ENCODE measurements at regions of chrX and their contacts with region 1.

Region 1: DNA sequence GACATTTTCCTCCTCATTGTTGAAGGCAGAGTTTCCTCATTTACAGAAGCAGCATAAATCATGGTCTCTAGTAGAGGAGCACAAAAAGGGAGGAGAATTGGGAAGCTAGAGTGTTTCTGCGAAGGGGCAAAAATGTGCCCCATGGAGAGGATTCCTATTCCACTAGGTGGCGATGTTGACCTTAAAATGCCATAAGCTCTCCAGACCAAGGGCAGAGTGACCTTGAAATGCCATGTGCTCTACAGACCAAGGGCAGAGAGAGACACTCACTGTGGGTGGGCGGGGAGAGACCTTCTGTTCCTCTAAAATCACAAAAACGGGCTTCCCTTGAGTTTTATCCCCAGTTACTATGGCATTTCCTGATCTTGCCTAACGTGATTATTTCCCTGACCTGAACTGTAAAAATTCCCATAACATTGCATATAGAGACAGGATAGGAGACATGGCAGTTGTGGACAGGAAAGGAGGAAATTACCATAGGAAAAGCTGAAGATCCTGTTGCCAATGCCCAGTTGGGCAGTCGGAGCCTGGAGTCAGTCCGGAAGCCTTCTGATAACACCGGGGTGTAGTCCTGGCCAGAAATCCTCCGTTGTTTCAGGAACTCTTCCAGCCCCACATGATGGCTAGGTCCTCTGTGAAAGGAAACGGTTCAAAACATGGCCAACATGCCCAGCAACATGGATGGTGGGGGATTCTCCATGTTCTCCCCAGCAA is 567.7 kb downstream of the MAGEB5 start:
- DNase-seq: peak; percentile 87
- H3K4me3 ChIP-seq: no peak overlapping the region
- H3K27ac ChIP-seq: peak overlapping the region; percentile 87
- H3K4me1 ChIP-seq: peaks cover 19% of the 10 kb centered on the region
- H3K27me3 ChIP-seq: no peaks in the 10 kb centered on the region
- CTCF ChIP-seq: peak; percentile 33 to 50
- POLR2A ChIP-seq: no peak

Region 2: GRCh38 chrX:25858273-25858880 is 925.3 kb before region 1 on chrX:
- CTCF ChIA-PET with region 1: no interaction called
- POLR2A ChIA-PET with region 1: no interaction called
- dilution Hi-C with region 1: no loop called
- intact Hi-C with region 1: loop called (anchors 10 kb)
- DNase-seq: peak; percentile 73
- H3K4me3 ChIP-seq: no peak overlapping the region
- H3K27ac ChIP-seq: peak overlapping the region; percentile 45
- H3K4me1 ChIP-seq: peaks cover 5% of the 10 kb centered on the region
- H3K27me3 ChIP-seq: no peaks in the 10 kb centered on the region
- CTCF ChIP-seq: peak; percentile 13 to 16
- POLR2A ChIP-seq: no peak

Region 3: DNA sequence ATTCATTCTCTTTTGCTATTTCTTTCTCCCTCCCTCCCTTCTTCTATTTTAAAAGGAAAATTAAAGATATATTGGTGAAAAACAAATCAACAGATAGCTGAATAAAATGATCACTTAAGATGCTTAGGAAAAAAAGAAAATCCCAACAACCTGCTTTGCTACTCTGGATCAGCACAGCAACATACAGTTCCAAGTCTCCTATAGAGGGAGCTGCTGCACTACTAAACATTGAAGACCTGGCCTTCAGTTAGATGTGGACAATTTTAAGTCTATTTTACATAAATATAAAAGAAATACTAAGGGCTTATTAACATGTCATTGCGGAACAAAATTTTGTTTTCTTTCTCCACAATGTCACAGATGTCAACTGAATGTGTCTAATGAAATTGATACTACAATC is 341.3 kb before region 1 on chrX:
- CTCF ChIA-PET with region 1: interaction called, 3 read pairs
- POLR2A ChIA-PET with region 1: no interaction called
- dilution Hi-C with region 1: no loop called
- intact Hi-C with region 1: loop called (anchors 1 kb)
- DNase-seq: peak; percentile 68
- H3K4me3 ChIP-seq: no peak overlapping the region
- H3K27ac ChIP-seq: no peak overlapping the region
- H3K4me1 ChIP-seq: no peaks in the 10 kb centered on the region
- H3K27me3 ChIP-seq: no peaks in the 10 kb centered on the region
- CTCF ChIP-seq: peak in 1 of 2 donors; percentile 39
- POLR2A ChIP-seq: no peak

Region 4: GRCh38 chrX:26822448-26822847 is 38.8 kb after region 1 on chrX:
- CTCF ChIA-PET with region 1: no interaction called
- POLR2A ChIA-PET with region 1: no interaction called
- dilution Hi-C with region 1: no loop called
- intact Hi-C with region 1: no loop called
- DNase-seq: no peak
- H3K4me3 ChIP-seq: no peak overlapping the region
- H3K27ac ChIP-seq: no peak overlapping the region
- H3K4me1 ChIP-seq: no peaks in the 10 kb centered on the region
- H3K27me3 ChIP-seq: no peaks in the 10 kb centered on the region
- CTCF ChIP-seq: no peak
- POLR2A ChIP-seq: no peak

Region 5: GRCh38 chrX:27132862-27133261 is 349.2 kb after region 1 on chrX:
- CTCF ChIA-PET with region 1: no interaction called
- POLR2A ChIA-PET with region 1: no interaction called
- dilution Hi-C with region 1: no loop called
- intact Hi-C with region 1: loop called (anchors 2 kb)
- DNase-seq: peak; percentile 85
- H3K4me3 ChIP-seq: no peak overlapping the region
- H3K27ac ChIP-seq: peak overlapping the region; percentile 34
- H3K4me1 ChIP-seq: no peaks in the 10 kb centered on the region
- H3K27me3 ChIP-seq: no peaks in the 10 kb centered on the region
- CTCF ChIP-seq: no peak
- POLR2A ChIP-seq: no peak

Region 6: DNA sequence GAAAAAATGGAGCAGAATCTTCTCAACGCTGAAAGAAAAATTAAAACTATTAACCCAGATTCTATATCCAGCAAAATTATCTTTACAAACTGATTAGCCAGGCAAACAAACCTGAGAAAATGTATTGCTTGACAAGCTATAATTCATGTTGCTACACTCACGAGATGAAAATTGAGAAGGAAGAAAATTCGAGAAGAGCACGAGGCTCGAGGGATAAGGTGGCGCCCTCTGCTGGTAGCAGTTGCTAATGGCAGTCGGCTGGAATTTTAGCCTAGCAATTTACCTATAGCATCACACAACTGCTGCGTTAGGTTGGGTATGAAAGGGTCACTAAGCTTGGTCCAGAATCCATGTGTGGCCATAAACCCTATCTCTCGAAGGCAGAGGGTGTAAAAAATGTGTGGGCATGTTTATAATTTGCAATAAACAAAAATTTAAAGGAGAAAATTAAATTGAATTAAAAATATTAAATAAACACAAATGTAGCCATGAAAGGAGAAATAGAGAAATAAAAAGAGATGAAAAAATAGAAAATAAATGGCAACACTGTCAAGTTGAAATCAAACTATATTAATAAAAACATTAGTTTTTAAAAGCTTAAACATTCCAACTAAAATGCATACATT is 552.9 kb after region 1 on chrX:
- CTCF ChIA-PET with region 1: no interaction called
- POLR2A ChIA-PET with region 1: no interaction called
- dilution Hi-C with region 1: no loop called
- intact Hi-C with region 1: loop called (anchors 1 kb)
- DNase-seq: peak; percentile 16
- H3K4me3 ChIP-seq: no peak overlapping the region
- H3K27ac ChIP-seq: no peak overlapping the region
- H3K4me1 ChIP-seq: no peaks in the 10 kb centered on the region
- H3K27me3 ChIP-seq: no peaks in the 10 kb centered on the region
- CTCF ChIP-seq: peak; percentile 50 to 61
- POLR2A ChIP-seq: no peak

Region 7: GRCh38 chrX:27565992-27566391 is 782.3 kb after region 1 on chrX:
- CTCF ChIA-PET with region 1: interaction called, 3 read pairs
- POLR2A ChIA-PET with region 1: no interaction called
- dilution Hi-C with region 1: no loop called
- intact Hi-C with region 1: loop called (anchors 1 kb)
- DNase-seq: peak; percentile 94
- H3K4me3 ChIP-seq: no peak overlapping the region
- H3K27ac ChIP-seq: peak overlapping the region; percentile 96
- H3K4me1 ChIP-seq: peaks cover 15% of the 10 kb centered on the region
- H3K27me3 ChIP-seq: no peaks in the 10 kb centered on the region
- CTCF ChIP-seq: no peak
- POLR2A ChIP-seq: no peak

Region 8: GRCh38 chrX:27890611-27891010 is 1106.9 kb after region 1 on chrX:
- CTCF ChIA-PET with region 1: no interaction called
- POLR2A ChIA-PET with region 1: no interaction called
- dilution Hi-C with region 1: no loop called
- intact Hi-C with region 1: loop called (anchors 10 kb)
- DNase-seq: peak; percentile 80
- H3K4me3 ChIP-seq: no peak overlapping the region
- H3K27ac ChIP-seq: peak overlapping the region; percentile 80
- H3K4me1 ChIP-seq: peaks cover 14% of the 10 kb centered on the region
- H3K27me3 ChIP-seq: no peaks in the 10 kb centered on the region
- CTCF ChIP-seq: no peak
- POLR2A ChIP-seq: no peak

Measured in endothelial cell of umbilical vein (primary cell).